ENCODE measurements at regions of chr11 and their contacts with region 1.

Region 1: GRCh38 chr11:131324921-131325570 is 45.4 kb upstream of the NTM start:
- DNase-seq: no peak
- ATAC-seq: no peak
- H3K4me3 ChIP-seq: no peak overlapping the region
- H3K27ac ChIP-seq: no peak overlapping the region
- H3K4me1 ChIP-seq: no peaks in the 10 kb centered on the region
- H3K27me3 ChIP-seq: peaks cover 0 to 2% of the 10 kb centered on the region in 2 experiments; a peak in 2 of 5 replicates
- CTCF ChIP-seq: no peak
- EP300 ChIP-seq: no peak
- POLR2A ChIP-seq: no peak
- RAD21 ChIP-seq: no peak

Region 2: GRCh38 chr11:130945896-130946295 is 379.1 kb before region 1 on chr11:
- CTCF ChIA-PET with region 1: no interaction called
- POLR2A ChIA-PET with region 1: no interaction called
- in situ Hi-C with region 1: no loop called
- intact Hi-C with region 1: no loop called
- DNase-seq: no peak
- ATAC-seq: no peak
- H3K4me3 ChIP-seq: no peak overlapping the region
- H3K27ac ChIP-seq: no peak overlapping the region
- H3K4me1 ChIP-seq: no peaks in the 10 kb centered on the region
- H3K27me3 ChIP-seq: peaks cover 0 to 8% of the 10 kb centered on the region in 2 experiments; a peak in 2 of 5 replicates
- CTCF ChIP-seq: no peak
- EP300 ChIP-seq: no peak
- POLR2A ChIP-seq: no peak
- RAD21 ChIP-seq: no peak

Region 3: DNA sequence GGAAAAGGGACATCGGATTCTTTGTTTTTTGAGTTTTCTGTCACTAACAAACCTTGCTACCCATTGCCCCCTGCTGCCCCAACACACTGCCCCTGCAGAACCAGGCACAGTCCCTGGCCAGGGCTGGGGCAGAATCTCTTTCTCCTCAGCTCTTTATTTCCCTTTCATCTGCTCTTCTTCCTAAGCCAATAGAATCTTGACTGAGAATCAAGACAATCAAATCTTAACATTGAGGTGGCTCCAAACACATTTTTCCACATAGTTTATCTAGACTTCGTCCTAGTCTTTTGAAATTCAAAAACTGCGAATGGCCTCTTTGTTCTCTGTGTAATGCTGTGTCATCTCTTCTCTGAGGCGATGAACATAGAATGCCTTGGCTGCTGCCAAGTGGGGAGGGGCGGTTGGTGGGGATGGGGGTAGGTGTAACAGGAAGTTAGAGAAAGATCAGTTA is 29.2 kb after region 1 on chr11:
- CTCF ChIA-PET with region 1: no interaction called
- POLR2A ChIA-PET with region 1: no interaction called
- in situ Hi-C with region 1: no loop called
- intact Hi-C with region 1: loop called (anchors 2 kb)
- DNase-seq: no peak
- ATAC-seq: no peak
- H3K4me3 ChIP-seq: no peak overlapping the region
- H3K27ac ChIP-seq: no peak overlapping the region
- H3K4me1 ChIP-seq: no peaks in the 10 kb centered on the region
- H3K27me3 ChIP-seq: peaks cover 2 to 7% of the 10 kb centered on the region in 2 experiments; a peak in 3 of 5 replicates
- CTCF ChIP-seq: no peak
- EP300 ChIP-seq: no peak
- POLR2A ChIP-seq: no peak
- RAD21 ChIP-seq: no peak

Region 4: DNA sequence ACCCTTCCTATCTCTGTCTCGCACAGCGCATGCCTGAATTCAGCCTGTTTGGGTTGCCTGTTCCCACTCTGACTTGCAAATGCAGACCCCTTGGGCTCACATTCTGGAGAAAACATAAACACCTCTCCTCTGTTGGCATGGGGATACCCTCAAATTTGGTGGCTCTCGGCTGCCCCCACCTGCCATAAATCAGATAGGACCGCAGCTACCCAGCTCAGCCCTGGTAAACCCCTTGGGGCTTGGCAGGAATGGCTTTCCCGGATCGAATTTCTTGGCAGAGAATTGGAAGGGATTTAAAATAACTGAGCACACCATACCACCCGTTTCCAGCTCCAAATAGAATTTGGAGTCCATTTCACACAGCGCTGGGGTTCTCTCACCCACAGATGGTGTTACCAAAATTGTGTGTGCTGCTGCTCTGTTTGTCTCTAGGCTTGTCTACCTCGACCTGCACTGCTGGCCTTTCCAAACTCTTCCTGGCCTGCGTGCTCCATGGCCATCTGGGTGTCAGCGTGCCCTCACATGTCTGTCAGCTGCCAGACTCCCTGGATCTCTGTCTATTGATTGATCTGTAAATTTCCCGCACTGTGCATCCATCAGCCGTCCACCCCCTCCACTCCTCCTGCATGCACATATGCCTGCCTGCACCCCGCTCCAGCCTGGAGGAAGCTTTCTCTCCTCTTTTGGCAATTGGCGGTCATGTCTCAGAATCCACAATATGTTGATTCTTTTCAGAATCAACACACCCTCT is 179.3 kb after region 1 on chr11:
- CTCF ChIA-PET with region 1: no interaction called
- POLR2A ChIA-PET with region 1: no interaction called
- in situ Hi-C with region 1: no loop called
- intact Hi-C with region 1: no loop called
- DNase-seq: no peak
- ATAC-seq: peak; percentile 31; the same call in 1 of the 3 replicates
- H3K4me3 ChIP-seq: no peak overlapping the region
- H3K27ac ChIP-seq: no peak overlapping the region
- H3K4me1 ChIP-seq: no peaks in the 10 kb centered on the region
- H3K27me3 ChIP-seq: peaks cover 0 to 5% of the 10 kb centered on the region in 2 experiments; a peak in 3 of 5 replicates
- CTCF ChIP-seq: no peak
- EP300 ChIP-seq: no peak
- POLR2A ChIP-seq: no peak
- RAD21 ChIP-seq: no peak

Region 5: GRCh38 chr11:131977231-131977630 is 652.2 kb after region 1 on chr11:
- CTCF ChIA-PET with region 1: no interaction called
- POLR2A ChIA-PET with region 1: no interaction called
- in situ Hi-C with region 1: no loop called
- intact Hi-C with region 1: no loop called
- DNase-seq: no peak
- ATAC-seq: no peak
- H3K4me3 ChIP-seq: no peak overlapping the region
- H3K27ac ChIP-seq: no peak overlapping the region
- H3K4me1 ChIP-seq: no peaks in the 10 kb centered on the region
- H3K27me3 ChIP-seq: no peaks in the 10 kb centered on the region; a peak in 1 of 5 replicates
- CTCF ChIP-seq: no peak
- EP300 ChIP-seq: no peak
- POLR2A ChIP-seq: no peak
- RAD21 ChIP-seq: no peak

Measured in HepG2 (cell line).